T-cell (primary cell): ENCODE measurements at regions of chr4 and their contacts with region 1.

Region 1: GRCh38 chr4:86118711-86119110 is 241.1 kb downstream of the MAPK10 start:
- DNase-seq: no peak
- ATAC-seq: no peak
- H3K4me3 ChIP-seq: no peak overlapping the region
- H3K4me3 Mint-ChIP-seq: no peak overlapping the region
- H3K27ac ChIP-seq: no peak overlapping the region
- H3K27ac Mint-ChIP-seq: no peak overlapping the region
- H3K4me1 ChIP-seq: no peaks in the 10 kb centered on the region
- H3K4me1 Mint-ChIP-seq: no peaks in the 10 kb centered on the region
- H3K27me3 ChIP-seq: no peaks in the 10 kb centered on the region
- H3K27me3 Mint-ChIP-seq: no peaks in the 10 kb centered on the region

Region 2: GRCh38 chr4:86132468-86132867 is 13.8 kb after region 1 on chr4:
- CTCF ChIA-PET with region 1: no interaction called
- POLR2A ChIA-PET with region 1: interaction called in 1 of 2 experiments, 11 read pairs
- DNase-seq: no peak
- ATAC-seq: no peak
- H3K4me3 ChIP-seq: no peak overlapping the region
- H3K4me3 Mint-ChIP-seq: no peak overlapping the region
- H3K27ac ChIP-seq: no peak overlapping the region
- H3K27ac Mint-ChIP-seq: no peak overlapping the region
- H3K4me1 ChIP-seq: no peaks in the 10 kb centered on the region
- H3K4me1 Mint-ChIP-seq: no peaks in the 10 kb centered on the region
- H3K27me3 ChIP-seq: no peaks in the 10 kb centered on the region
- H3K27me3 Mint-ChIP-seq: no peaks in the 10 kb centered on the region

Region 3: GRCh38 chr4:86152454-86152853 is 33.7 kb after region 1 on chr4:
- CTCF ChIA-PET with region 1: no interaction called
- POLR2A ChIA-PET with region 1: no interaction called
- DNase-seq: no peak
- ATAC-seq: no peak
- H3K4me3 ChIP-seq: no peak overlapping the region
- H3K4me3 Mint-ChIP-seq: no peak overlapping the region
- H3K27ac ChIP-seq: no peak overlapping the region
- H3K27ac Mint-ChIP-seq: no peak overlapping the region
- H3K4me1 ChIP-seq: no peaks in the 10 kb centered on the region
- H3K4me1 Mint-ChIP-seq: no peaks in the 10 kb centered on the region
- H3K27me3 ChIP-seq: no peaks in the 10 kb centered on the region
- H3K27me3 Mint-ChIP-seq: no peaks in the 10 kb centered on the region

Region 4: DNA sequence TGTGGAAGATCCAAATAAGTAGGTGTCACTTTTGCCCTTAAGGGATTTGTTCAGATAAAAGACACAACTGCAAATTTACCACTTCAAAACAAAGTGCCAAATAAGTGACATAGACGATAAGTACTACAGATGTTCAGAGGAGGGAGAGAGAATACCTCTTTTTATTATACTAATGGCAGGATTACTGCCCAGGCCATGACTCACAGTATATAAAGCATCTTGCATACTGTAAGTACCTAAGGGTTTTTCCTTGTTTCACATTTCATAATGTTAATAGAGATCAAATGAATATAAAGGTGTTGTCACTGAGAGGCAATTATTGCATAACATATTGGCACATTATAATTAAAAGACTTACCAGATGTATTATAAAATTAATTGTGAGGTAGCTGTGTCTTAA is 521.8 kb after region 1 on chr4:
- CTCF ChIA-PET with region 1: no interaction called
- POLR2A ChIA-PET with region 1: no interaction called
- DNase-seq: no peak
- ATAC-seq: no peak
- H3K4me3 ChIP-seq: no peak overlapping the region
- H3K4me3 Mint-ChIP-seq: no peak overlapping the region
- H3K27ac ChIP-seq: no peak overlapping the region
- H3K27ac Mint-ChIP-seq: no peak overlapping the region
- H3K4me1 ChIP-seq: no peaks in the 10 kb centered on the region
- H3K4me1 Mint-ChIP-seq: no peaks in the 10 kb centered on the region
- H3K27me3 ChIP-seq: no peaks in the 10 kb centered on the region
- H3K27me3 Mint-ChIP-seq: no peaks in the 10 kb centered on the region